ENCODE measurements at regions of chr5 and their contacts with region 1.

Region 1: DNA sequence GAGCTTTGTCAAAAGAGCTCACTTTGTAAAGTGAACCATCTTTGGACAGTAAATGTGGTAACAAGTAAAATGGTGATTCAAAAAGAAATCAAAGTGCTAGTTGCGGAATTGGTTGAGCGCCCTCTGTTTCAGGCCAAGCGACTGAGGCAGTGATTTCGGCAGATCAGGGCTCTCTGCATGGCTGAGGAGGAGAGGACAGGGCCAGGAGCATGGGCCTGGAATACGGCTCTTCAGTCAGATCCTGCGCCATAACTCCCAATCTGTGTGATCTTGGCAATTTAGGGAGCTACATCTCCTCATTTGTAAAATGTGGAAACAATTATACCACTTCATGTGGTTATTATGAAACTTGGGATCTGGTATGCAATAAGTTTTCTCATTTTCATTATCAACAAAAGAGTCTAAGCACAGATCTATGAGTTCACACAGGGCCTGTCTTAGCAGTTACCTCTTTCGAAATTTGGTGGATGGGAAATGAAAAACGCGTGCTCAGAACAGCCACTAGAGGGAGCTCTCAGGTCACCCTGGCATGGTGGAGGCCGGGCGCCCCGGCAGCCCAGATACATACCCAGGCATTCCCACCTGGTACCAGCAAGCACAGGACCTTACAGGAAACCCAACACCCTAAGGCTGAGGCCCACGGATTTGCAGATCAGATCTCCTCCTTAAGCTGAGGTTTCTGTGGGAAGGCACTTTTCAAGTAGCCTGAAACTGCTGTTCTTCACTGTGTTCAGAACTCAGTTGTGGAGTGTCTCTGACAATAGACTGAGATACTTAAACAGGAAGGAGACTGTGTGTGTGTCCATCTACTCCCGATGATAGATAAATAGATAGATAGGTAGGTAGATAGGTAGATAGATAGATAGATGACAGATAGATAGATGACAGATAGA is 303.7 kb downstream of the RAB3C start:
- DNase-seq: peak; percentile 83
- H3K4me3 Mint-ChIP-seq: peak overlapping the region; percentile 24
- H3K27ac Mint-ChIP-seq: peak overlapping the region; percentile 70
- H3K4me1 Mint-ChIP-seq: peaks cover 40% of the 10 kb centered on the region
- H3K27me3 Mint-ChIP-seq: peaks cover 7% of the 10 kb centered on the region

Region 2: DNA sequence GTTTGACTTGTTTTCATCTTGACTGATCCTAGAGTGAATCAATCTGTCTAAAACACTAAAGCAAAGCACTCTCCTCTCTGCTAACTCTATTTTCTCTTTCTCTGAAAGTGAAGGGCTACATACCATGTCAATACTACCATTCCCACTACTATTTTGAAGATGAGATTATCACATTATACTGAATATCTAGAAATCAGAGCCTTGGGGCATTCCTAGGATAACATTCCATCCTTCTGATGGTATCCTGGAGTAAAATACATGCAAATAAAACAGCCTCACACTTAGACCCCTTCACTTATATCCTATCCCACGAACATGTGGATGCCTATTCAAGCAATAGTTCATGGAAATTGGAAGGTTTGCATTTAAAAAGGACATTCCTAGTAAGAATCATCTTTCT is 1094.7 kb before region 1 on chr5:
- CTCF ChIA-PET with region 1: no interaction called
- POLR2A ChIA-PET with region 1: no interaction called
- intact Hi-C with region 1: no loop called
- DNase-seq: no peak
- H3K4me3 Mint-ChIP-seq: no peak overlapping the region
- H3K27ac Mint-ChIP-seq: no peak overlapping the region
- H3K4me1 Mint-ChIP-seq: no peaks in the 10 kb centered on the region
- H3K27me3 Mint-ChIP-seq: peaks cover 6% of the 10 kb centered on the region

Region 3: DNA sequence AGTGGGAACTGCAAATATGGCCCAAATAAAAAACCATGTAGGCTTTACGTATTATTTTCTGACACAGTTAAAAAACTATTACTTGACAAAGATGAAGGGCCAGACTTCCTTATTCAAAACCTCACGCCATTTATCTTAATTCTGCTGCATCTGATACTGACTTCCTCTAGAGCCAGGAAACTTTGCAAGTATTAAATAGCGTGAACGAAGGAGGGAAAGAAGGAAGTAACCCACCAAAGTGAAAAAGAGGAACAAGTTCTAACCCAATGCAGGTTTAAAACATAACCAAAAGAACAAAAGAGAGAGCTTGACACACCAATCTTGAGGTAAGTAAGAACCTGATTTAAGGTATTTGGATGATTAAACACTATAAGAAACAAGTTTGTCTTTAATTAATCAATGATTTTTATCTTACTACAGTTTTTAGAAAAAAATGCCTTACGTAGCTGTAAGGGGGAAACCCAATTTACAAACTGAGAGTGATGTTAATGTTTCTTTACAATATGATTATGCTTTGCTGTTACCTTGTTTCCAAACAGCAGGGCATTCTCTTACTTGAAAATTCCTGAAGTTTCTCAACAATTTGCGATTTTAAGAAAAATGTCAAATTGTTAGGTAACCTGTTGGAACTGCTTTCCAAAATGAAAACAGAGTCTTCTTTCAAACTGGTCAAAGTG is 395.2 kb before region 1 on chr5 and contains the start of gene GAPT:
- CTCF ChIA-PET with region 1: no interaction called
- POLR2A ChIA-PET with region 1: no interaction called
- intact Hi-C with region 1: no loop called
- DNase-seq: no peak
- H3K4me3 Mint-ChIP-seq: no peak within 1 kb of the TSS
- H3K27ac Mint-ChIP-seq: no peak within 1 kb of the TSS
- H3K4me1 Mint-ChIP-seq: no peaks in the 10 kb centered on the region
- H3K27me3 Mint-ChIP-seq: peaks cover 10% of the 10 kb centered on the region
- total RNA-seq, gene GAPT: not detected

Region 4: DNA sequence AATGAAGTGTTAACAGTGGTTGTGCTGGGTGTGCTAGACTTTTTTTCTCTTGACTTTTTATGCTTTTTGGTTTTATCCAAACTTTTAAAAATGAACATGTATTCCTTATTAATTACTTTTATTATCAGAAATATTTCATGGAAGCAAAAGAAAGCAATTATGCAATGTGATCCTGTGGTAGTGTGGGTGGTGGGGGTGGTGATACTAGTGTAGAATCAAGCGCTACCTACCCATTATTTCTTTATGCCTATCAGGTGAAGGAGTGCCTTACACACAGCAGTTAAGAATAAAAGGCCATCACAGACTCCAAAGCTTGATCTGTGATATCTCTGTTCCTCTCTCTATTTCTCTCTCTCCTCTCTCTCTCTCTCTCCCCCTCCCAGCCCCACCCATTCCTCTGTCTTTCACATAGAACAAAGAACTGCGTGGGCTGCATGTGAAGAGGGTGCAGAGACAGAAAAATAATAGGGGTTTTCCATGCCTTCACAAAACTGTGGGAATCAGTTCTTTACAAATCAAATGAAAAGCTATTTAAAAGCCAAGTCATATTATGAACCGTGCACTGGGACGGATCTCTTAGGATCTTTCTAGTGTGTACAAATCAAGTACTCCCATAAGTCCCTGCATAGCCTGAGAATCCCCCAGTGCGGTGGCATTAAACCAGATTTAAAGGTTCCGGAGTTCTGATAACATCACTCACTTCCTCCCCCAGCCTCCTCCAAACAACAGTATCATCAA is 47.5 kb after region 1 on chr5:
- CTCF ChIA-PET with region 1: interaction called, 7 read pairs
- POLR2A ChIA-PET with region 1: no interaction called
- intact Hi-C with region 1: loop called (anchors 1 kb)
- DNase-seq: peak; percentile 52
- H3K4me3 Mint-ChIP-seq: no peak overlapping the region
- H3K27ac Mint-ChIP-seq: peak overlapping the region; percentile 2
- H3K4me1 Mint-ChIP-seq: peaks cover 32% of the 10 kb centered on the region
- H3K27me3 Mint-ChIP-seq: no peaks in the 10 kb centered on the region

Region 5: DNA sequence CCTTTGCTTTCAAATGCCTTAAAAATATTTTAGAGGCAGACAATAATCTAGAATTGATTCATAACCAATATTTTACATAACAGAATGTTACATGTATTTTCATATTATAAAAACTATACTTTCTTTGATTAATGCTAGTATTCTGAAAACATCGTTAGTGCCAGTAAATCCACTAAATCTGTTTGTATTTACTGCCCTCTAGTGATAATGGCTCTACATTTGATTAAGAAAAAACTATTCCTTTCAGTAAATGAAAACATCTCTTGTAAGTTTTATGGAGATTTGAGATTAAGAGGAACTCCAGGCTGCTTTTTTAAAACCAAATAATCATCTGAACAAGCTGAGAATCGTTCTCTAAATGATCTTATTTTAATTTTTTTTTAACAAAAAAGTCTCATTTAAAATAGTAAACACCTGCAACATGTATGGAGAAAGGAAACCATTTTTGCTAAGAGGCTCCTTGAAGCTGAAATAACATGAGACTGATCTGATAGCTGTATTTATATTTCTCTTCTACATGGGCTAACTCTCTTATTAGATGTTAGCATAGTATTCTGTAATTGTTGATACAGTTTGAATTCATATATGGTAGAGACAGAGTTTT is 121.0 kb after region 1 on chr5:
- CTCF ChIA-PET with region 1: interaction called, 16 read pairs
- POLR2A ChIA-PET with region 1: no interaction called
- intact Hi-C with region 1: loop called (anchors 1 kb)
- DNase-seq: no peak
- H3K4me3 Mint-ChIP-seq: no peak overlapping the region
- H3K27ac Mint-ChIP-seq: no peak overlapping the region
- H3K4me1 Mint-ChIP-seq: peaks cover 57% of the 10 kb centered on the region
- H3K27me3 Mint-ChIP-seq: no peaks in the 10 kb centered on the region

Region 6: GRCh38 chr5:59069438-59070079 is 183.0 kb after region 1 on chr5:
- CTCF ChIA-PET with region 1: no interaction called
- POLR2A ChIA-PET with region 1: no interaction called
- intact Hi-C with region 1: no loop called
- DNase-seq: no peak
- H3K4me3 Mint-ChIP-seq: no peak overlapping the region
- H3K27ac Mint-ChIP-seq: no peak overlapping the region
- H3K4me1 Mint-ChIP-seq: peaks cover 4% of the 10 kb centered on the region
- H3K27me3 Mint-ChIP-seq: no peaks in the 10 kb centered on the region

Region 7: GRCh38 chr5:59099270-59099994 is 212.9 kb after region 1 on chr5:
- CTCF ChIA-PET with region 1: interaction called, 3 read pairs
- POLR2A ChIA-PET with region 1: interaction called, 3 read pairs
- intact Hi-C with region 1: loop called (anchors 1 kb)
- DNase-seq: peak; percentile 63
- H3K4me3 Mint-ChIP-seq: peak overlapping the region; percentile 8
- H3K27ac Mint-ChIP-seq: peak overlapping the region; percentile 73
- H3K4me1 Mint-ChIP-seq: peaks cover 37% of the 10 kb centered on the region
- H3K27me3 Mint-ChIP-seq: no peaks in the 10 kb centered on the region

Region 8: GRCh38 chr5:59188419-59189225 is 302.1 kb after region 1 on chr5:
- CTCF ChIA-PET with region 1: interaction called, 14 read pairs
- POLR2A ChIA-PET with region 1: no interaction called
- intact Hi-C with region 1: loop called (anchors 5 kb)
- DNase-seq: peak; percentile 74
- H3K4me3 Mint-ChIP-seq: no peak overlapping the region
- H3K27ac Mint-ChIP-seq: no peak overlapping the region
- H3K4me1 Mint-ChIP-seq: peaks cover 3% of the 10 kb centered on the region
- H3K27me3 Mint-ChIP-seq: peaks cover 22% of the 10 kb centered on the region